AG04450 (cell line): ENCODE measurements at regions of chr10 and their contacts with region 1.

Region 1: GRCh38 chr10:12214763-12215218 is 18.8 kb downstream of the CDC123 start:
- DNase-seq: peak; percentile 24
- H3K4me3 ChIP-seq: no peak overlapping the region
- H3K27ac ChIP-seq: no peak overlapping the region
- H3K27me3 ChIP-seq: no peaks in the 10 kb centered on the region
- CTCF ChIP-seq: peak; percentile 75

Region 2: DNA sequence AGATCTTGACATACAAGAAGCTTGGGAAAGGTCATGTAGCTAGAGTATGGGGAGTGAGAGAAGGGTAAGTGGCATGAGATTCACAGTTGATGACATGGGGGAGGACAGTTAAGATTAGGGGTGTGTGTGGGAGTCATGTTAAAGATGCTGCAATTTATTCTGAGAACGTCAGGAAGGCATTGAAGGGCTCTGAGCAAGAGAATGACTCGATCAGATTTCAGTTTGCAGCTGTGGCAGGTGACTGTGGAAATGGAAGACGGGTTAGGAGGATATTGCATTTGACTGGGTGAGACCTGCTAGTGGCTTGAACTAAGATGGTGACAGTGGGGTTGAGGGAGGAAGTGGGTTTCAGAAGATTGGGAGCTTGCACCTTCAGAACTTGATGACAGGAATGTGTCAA is 13.2 kb before region 1 on chr10:
- CTCF ChIA-PET with region 1: interaction called, 46 read pairs
- POLR2A ChIA-PET with region 1: no interaction called
- DNase-seq: no peak
- H3K4me3 ChIP-seq: no peak overlapping the region
- H3K27ac ChIP-seq: no peak overlapping the region
- H3K27me3 ChIP-seq: no peaks in the 10 kb centered on the region
- CTCF ChIP-seq: no peak

Region 3: GRCh38 chr10:12237265-12238220 is 22.8 kb after region 1 on chr10:
- CTCF ChIA-PET with region 1: interaction called, 13 read pairs
- POLR2A ChIA-PET with region 1: no interaction called
- DNase-seq: no peak
- H3K4me3 ChIP-seq: no peak overlapping the region
- H3K27ac ChIP-seq: no peak overlapping the region
- H3K27me3 ChIP-seq: no peaks in the 10 kb centered on the region
- CTCF ChIP-seq: no peak

Region 4: GRCh38 chr10:12710594-12711349 is 496.0 kb after region 1 on chr10:
- CTCF ChIA-PET with region 1: interaction called, 93 read pairs
- POLR2A ChIA-PET with region 1: no interaction called
- DNase-seq: peak; percentile 73
- H3K4me3 ChIP-seq: no peak overlapping the region
- H3K27ac ChIP-seq: peak overlapping the region; percentile 80
- H3K27me3 ChIP-seq: no peaks in the 10 kb centered on the region
- CTCF ChIP-seq: peak; percentile 99

Region 5: DNA sequence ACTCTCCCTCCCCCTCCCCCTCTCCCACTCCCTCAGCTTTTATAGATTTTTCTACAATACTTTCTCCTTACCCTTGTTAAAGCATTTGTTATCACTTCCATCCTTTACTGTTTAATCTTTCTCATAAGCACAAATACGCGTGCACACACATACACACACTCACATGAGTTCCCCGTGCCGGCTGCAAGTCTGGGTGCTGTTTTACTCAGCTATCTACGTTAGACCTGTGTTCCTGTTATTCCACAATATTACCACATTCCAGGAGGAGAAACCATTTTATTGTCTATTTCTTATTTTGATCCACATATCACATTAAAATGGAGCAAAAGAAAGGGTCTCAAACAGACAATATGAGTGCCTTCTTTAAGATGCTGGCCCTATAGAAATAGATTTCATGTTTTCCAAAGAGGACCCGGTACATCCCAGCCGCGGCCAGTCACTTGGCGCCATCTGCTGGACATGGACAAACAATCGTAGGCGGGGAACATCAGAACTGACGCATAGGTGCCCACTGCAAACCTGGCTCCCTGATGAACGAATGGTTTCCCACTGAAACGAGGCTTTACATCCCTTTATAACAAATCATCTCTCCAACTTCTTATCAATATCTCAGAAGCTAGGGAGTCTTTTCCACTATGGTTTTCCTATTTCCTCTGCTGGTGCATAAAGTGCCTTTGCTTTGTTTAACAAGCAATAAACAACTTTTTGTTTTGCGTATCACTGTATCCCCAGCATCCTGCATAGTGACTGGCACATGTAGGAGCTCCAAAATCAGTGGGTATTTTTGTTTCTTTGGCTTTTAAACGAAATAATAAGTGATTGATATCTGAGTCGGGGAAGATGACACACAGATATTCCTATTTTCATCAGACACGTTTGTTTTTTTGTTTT is 860.0 kb after region 1 on chr10:
- CTCF ChIA-PET with region 1: interaction called, 22 read pairs
- POLR2A ChIA-PET with region 1: no interaction called
- DNase-seq: peak; percentile 21
- H3K4me3 ChIP-seq: no peak overlapping the region
- H3K27ac ChIP-seq: no peak overlapping the region
- H3K27me3 ChIP-seq: peaks cover 4% of the 10 kb centered on the region
- CTCF ChIP-seq: peak; percentile 89